ENCODE measurements at regions of chr5 and their contacts with region 1.

Region 1: DNA sequence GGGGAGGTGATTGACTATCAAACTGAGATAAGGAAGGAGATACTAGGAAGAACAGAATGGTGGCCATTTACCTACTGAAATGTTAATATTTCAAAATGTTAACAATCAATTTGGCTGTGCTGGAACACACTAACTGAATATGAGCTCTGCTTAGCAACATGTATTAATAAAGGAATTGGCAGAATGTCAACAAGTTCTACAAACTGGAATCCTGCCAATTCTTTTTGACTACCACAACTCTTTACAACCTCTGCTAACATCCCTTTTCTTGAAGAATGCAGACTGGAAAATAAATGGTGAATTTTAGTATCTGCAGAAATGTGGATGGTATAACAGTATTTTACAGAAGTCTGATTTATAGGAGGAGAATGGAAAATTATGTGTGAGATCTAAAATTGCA is 446.4 kb downstream of the ISL1 start:
- DNase-seq: no peak
- H3K4me3 Mint-ChIP-seq: peak overlapping the region; percentile 54
- H3K27ac Mint-ChIP-seq: peak overlapping the region; percentile 62
- H3K4me1 Mint-ChIP-seq: peaks cover 23% of the 10 kb centered on the region
- H3K27me3 Mint-ChIP-seq: no peaks in the 10 kb centered on the region
- CTCF ChIP-seq: no peak

Region 2: GRCh38 chr5:51691546-51692079 is 138.1 kb before region 1 on chr5:
- CTCF ChIA-PET with region 1: no interaction called
- intact Hi-C with region 1: loop called (anchors 10 kb)
- DNase-seq: no peak
- H3K4me3 Mint-ChIP-seq: no peak overlapping the region
- H3K27ac Mint-ChIP-seq: no peak overlapping the region
- H3K4me1 Mint-ChIP-seq: no peaks in the 10 kb centered on the region
- H3K27me3 Mint-ChIP-seq: no peaks in the 10 kb centered on the region
- CTCF ChIP-seq: no peak

Region 3: GRCh38 chr5:51746023-51746422 is 83.7 kb before region 1 on chr5:
- CTCF ChIA-PET with region 1: no interaction called
- intact Hi-C with region 1: no loop called
- DNase-seq: no peak
- H3K4me3 Mint-ChIP-seq: no peak overlapping the region
- H3K27ac Mint-ChIP-seq: no peak overlapping the region
- H3K4me1 Mint-ChIP-seq: no peaks in the 10 kb centered on the region
- H3K27me3 Mint-ChIP-seq: no peaks in the 10 kb centered on the region
- CTCF ChIP-seq: no peak

Region 4: DNA sequence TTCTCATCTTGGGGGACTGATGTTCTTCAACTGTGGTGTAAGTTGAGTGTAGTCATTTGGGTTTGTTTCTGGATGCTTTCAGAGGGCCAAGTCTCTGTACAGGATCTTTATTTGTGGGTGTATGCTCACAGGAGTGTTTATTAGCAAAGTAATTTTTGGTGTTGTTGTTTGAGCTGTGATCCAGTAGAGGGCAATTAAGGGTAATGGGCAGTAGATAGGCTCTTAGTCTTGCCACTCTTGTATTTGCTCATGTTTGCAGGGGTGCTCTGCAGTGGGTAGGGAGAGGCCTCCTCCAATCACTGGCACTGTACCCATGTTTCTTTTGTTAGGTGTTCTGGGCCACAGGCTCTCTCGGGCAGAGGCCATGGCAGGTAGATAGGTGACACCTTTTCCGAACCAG is 1113.6 kb after region 1 on chr5:
- CTCF ChIA-PET with region 1: no interaction called
- intact Hi-C with region 1: no loop called
- DNase-seq: no peak
- H3K4me3 Mint-ChIP-seq: no peak overlapping the region
- H3K27ac Mint-ChIP-seq: no peak overlapping the region
- H3K4me1 Mint-ChIP-seq: peaks cover 24% of the 10 kb centered on the region
- H3K27me3 Mint-ChIP-seq: no peaks in the 10 kb centered on the region
- CTCF ChIP-seq: peak; percentile 34